Adrenal gland (tissue), 19 donors: ENCODE measurements at regions of chr5 and their contacts with region 1.

Region 1: GRCh38 chr5:153711755-153712154 is 221.3 kb downstream of the GRIA1 start:
- DNase-seq: no peak
- H3K4me3 ChIP-seq: no peak overlapping the region
- H3K27ac ChIP-seq: no peak overlapping the region
- H3K4me1 ChIP-seq: no peaks in the 10 kb centered on the region
- H3K27me3 ChIP-seq: no peaks in the 10 kb centered on the region
- CTCF ChIP-seq: peak; percentile 22 to 64 (median 48)
- POLR2A ChIP-seq: no peak

Region 2: DNA sequence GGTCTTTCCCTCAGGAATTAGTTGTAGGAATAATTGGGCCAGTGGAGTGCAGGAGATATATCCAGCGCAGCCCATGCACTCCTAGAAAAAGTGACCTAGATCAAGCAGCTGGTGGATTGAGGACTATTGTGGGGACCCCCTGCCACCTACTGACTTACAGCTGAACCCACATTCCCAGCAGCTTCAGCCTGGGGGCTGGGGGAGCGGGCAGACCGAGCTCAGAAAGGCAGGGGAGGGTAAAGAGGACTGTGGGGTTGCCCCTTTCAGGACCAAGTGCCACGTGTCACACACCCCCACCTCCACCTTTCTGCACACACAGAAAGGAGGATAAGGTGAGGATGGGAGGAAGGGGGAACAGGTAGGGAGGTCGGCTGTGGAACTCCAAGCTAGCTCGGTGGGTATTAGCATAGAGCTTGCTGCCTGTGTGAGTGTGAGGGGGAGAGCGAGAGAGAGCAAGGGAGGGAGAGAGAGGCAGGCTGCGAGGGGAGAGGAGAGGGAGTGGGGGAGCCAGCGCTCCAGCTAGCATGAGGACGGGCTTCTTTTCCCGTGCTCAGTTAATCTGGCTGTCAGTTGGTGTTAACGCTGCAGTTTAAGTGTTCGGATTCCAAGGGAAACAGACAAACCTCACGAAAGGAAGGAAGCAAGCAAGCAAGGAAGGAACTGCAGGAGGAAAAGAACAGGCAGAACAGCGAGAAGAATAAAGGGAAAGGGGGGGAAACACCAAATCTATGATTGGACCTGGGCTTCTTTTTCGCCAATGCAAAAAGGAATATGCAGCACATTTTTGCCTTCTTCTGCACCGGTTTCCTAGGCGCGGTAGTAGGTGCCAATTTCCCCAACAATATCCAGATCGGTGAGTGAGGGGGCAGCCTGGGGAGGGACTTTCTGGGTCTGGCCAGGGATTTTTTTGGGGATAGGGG is 221.4 kb before region 1 on chr5 and contains the start of gene GRIA1:
- intact Hi-C with region 1: loop called (anchors 5 to 10 kb)
- DNase-seq: no peak
- H3K4me3 ChIP-seq: no peak within 1 kb of the TSS
- H3K27ac ChIP-seq: no peak within 1 kb of the TSS
- H3K4me1 ChIP-seq: no peaks in the 10 kb centered on the region
- H3K27me3 ChIP-seq: no peaks in the 10 kb centered on the region
- CTCF ChIP-seq: no peak
- POLR2A ChIP-seq: no peak
- total RNA-seq, gene GRIA1: 0.12 to 2.3 (median 0.88) TPM

Region 3: DNA sequence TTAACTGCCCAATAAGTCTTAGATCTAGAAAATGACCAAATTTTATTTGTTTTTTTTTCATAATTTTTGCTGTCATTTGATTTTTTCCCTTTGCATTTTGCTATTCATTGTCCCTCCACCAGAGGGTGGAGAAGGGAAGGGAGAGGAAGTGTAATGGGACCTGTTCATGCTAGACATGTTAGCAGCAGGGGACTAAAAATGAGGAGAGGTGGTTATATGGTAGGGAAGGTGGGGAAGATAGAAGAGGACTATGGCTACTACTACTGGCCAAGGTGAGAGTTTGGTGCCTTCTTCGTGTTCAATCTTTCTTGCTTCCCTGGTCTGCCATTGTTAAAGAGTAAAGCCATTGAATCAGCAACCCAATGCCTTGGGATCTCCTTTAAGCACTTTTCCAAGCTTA is 214.9 kb before region 1 on chr5:
- intact Hi-C with region 1: loop called (anchors 5 to 10 kb)
- DNase-seq: peak in 3 of 7 donors; percentile 11 to 29 (median 16)
- H3K4me3 ChIP-seq: no peak overlapping the region
- H3K27ac ChIP-seq: no peak overlapping the region
- H3K4me1 ChIP-seq: no peaks in the 10 kb centered on the region
- H3K27me3 ChIP-seq: no peaks in the 10 kb centered on the region
- CTCF ChIP-seq: peak; percentile 66 to 96 (median 80)
- POLR2A ChIP-seq: no peak